Head of caudate nucleus (tissue), 42 donors: ENCODE measurements at regions of chr11 and their contacts with region 1.

Region 1: GRCh38 chr11:124953753-124954589 is at the start of gene CCDC15:
- DNase-seq: peak; percentile 96 to 100 (median 99)

Region 2: GRCh38 chr11:125053167-125053566 is 99.2 kb after region 1 on chr11:
- intact Hi-C with region 1: no loop called
- DNase-seq: no peak

Region 3: GRCh38 chr11:125111343-125112207 is 157.6 kb after region 1 on chr11 and contains the start of gene TMEM218:
- intact Hi-C with region 1: loop called (anchors 5 kb)
- DNase-seq: peak; percentile 98 to 100 (median 100)

Region 4: GRCh38 chr11:125141686-125142535 is 187.9 kb after region 1 on chr11:
- intact Hi-C with region 1: loop called (anchors 10 kb)
- DNase-seq: peak in 41 of 42 donors; percentile 27 to 84 (median 60)